Sigmoid colon (tissue), 7 donors: ENCODE measurements at regions of chr11 and their contacts with region 1.

Region 1: GRCh38 chr11:73965076-73965860 is 14.4 kb downstream of the DNAJB13 start:
- DNase-seq: no peak
- H3K4me3 ChIP-seq: no peak overlapping the region
- H3K27ac ChIP-seq: no peak overlapping the region
- H3K4me1 ChIP-seq: peaks cover 0 to 9% (median 5%) of the 10 kb centered on the region in 4 donors
- H3K27me3 ChIP-seq: peaks cover 0 to 6% (median 0%) of the 10 kb centered on the region in 3 donors
- CTCF ChIP-seq: no peak
- EP300 ChIP-seq: no peak
- POLR2A ChIP-seq: no peak

Region 2: DNA sequence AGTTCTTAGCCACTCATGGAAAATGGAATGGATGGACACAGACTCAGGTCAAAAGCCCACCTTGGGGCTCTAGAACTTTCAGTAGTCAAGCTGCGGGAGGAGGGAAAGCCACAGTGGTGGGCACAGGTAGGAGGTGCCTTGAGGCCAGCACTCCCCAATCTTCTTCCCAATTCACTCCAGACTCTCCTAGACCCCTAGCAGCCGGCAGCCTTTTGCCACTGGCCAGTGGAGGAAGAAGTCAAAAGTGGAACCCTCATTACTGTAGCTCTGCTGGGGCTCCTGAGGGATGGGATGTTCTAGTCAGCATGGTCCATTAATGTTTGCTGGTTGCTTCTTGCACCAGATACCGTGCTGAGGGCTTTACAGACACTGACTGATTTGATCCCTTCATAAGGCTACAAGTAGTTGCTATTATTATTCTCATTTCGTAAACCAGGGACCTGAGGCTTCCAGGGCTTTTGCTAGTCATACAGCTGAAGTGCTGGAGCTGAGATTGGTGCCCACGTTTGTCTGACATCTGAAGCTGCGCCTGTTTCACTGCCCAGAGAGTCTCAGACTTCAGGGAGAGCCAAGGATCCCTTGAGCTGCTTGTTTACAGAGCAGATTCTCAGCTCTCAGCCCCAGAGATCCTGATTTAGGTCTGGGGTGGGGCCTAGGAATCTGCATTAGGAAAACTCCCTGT is 42.6 kb after region 1 on chr11:
- intact Hi-C with region 1: no loop called
- DNase-seq: peak; percentile 27
- H3K4me3 ChIP-seq: no peak overlapping the region
- H3K27ac ChIP-seq: no peak overlapping the region
- H3K4me1 ChIP-seq: peaks cover 0 to 5% (median 0%) of the 10 kb centered on the region in 4 donors
- H3K27me3 ChIP-seq: no peaks in the 10 kb centered on the region
- CTCF ChIP-seq: no peak
- EP300 ChIP-seq: no peak
- POLR2A ChIP-seq: no peak

Region 3: DNA sequence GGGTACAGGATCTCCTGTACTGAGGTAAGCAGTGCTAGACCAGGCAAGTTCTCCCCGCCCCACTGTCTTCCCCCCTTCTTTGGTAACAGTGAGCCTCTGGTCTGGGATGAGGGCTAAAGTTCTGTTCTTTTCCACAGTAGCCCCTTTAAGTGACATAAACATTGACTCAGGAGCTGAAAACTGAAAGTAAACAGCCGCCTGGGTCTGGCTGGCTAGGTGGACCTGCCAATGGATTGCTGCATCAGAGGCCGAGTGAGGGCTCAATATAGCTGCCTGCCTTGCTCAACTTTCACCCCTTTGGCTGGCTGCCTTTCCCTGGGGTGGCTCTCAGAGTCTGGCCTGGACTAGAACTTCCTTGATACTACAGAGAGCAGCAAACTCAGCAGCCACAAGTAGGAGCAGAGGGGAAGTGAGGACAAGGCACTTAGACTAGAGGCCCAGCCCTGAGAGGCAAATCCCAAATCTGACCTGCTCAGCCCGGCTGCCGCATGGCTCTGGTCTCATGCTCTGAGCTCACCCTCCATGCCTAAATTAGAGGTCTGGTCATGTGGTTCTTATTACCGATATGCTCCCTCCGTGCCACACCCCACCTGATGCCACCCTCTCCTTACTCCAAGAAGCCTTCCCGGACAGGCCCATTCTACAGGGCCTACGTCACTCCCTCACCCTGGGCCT is 53.2 kb after region 1 on chr11:
- intact Hi-C with region 1: loop called (anchors 1 kb)
- DNase-seq: peak; percentile 97
- H3K4me3 ChIP-seq: no peak overlapping the region
- H3K27ac ChIP-seq: peak overlapping the region; percentile 53 to 84 (median 72)
- H3K4me1 ChIP-seq: peaks cover 0 to 24% (median 22%) of the 10 kb centered on the region in 4 donors
- H3K27me3 ChIP-seq: no peaks in the 10 kb centered on the region
- CTCF ChIP-seq: no peak
- EP300 ChIP-seq: no peak
- POLR2A ChIP-seq: no peak

Region 4: GRCh38 chr11:74090701-74091100 is 125.4 kb after region 1 on chr11:
- intact Hi-C with region 1: loop called (anchors 10 kb)
- DNase-seq: no peak
- H3K4me3 ChIP-seq: no peak overlapping the region
- H3K27ac ChIP-seq: no peak overlapping the region
- H3K4me1 ChIP-seq: no peaks in the 10 kb centered on the region
- H3K27me3 ChIP-seq: no peaks in the 10 kb centered on the region
- CTCF ChIP-seq: no peak
- EP300 ChIP-seq: no peak
- POLR2A ChIP-seq: no peak